ENCODE measurements at regions of chr7 and their contacts with region 1.

Region 1: GRCh38 chr7:4641667-4642467 is 40.2 kb upstream of the FOXK1 start:
- DNase-seq: peak; percentile 95
- H3K4me3 ChIP-seq: peak overlapping the region; percentile 59 to 64 (median 61)
- H3K27ac ChIP-seq: peak overlapping the region; percentile 64
- H3K4me1 ChIP-seq: peaks cover 7% of the 10 kb centered on the region
- H3K27me3 ChIP-seq: no peaks in the 10 kb centered on the region
- CTCF ChIP-seq: peak; percentile 42 to 45
- POLR2A ChIP-seq: peak; percentile 82

Region 2: DNA sequence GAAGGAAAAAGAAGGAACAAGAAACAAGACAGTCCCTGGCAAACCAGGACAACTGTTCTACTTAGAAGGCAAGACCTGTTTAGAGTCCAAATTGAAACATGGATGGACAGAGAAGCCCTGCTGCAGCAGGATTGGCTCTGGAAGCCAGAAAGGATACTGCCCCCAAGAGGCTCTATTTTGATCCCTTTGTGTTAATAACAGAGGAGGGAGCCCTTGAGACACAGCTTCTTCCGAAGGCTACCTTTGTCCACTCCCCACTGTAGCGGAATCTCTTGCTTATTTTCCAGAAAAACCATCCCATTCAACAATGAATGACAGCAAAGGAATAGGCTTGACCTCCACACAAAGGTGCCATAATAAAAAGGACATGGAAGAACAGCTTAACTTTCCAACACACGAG is 80.1 kb before region 1 on chr7:
- CTCF ChIA-PET with region 1: no interaction called
- POLR2A ChIA-PET with region 1: no interaction called
- dilution Hi-C with region 1: no loop called
- intact Hi-C with region 1: no loop called
- DNase-seq: no peak
- H3K4me3 ChIP-seq: no peak overlapping the region
- H3K27ac ChIP-seq: no peak overlapping the region
- H3K4me1 ChIP-seq: no peaks in the 10 kb centered on the region
- H3K27me3 ChIP-seq: no peaks in the 10 kb centered on the region
- CTCF ChIP-seq: no peak
- POLR2A ChIP-seq: no peak

Region 3: DNA sequence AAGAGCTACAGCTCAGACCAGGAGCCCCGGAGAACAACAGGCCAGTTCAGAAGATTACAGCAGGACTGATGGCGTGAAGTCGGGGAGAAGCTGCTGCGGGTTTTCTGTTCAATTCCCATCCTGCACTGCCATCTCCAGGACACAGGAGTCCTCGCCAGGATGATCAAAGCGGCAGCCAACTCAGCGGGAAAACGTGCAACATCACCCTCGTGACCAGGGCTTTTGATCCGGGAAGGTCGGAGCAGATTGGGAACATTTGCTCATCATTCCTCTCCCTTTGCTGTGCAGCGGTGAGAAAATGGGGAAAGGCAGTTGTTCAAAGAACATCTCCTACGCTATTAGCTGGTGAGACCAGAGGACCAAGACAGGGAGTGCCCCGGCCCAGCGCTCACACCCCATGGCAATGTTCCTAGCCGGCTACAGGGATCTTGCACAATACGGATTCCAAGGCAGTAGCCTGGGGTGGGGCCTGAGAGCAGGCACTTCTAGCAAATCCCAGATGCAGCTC is 10.1 kb before region 1 on chr7:
- CTCF ChIA-PET with region 1: interaction called, 14 read pairs
- POLR2A ChIA-PET with region 1: no interaction called
- dilution Hi-C with region 1: no loop called
- intact Hi-C with region 1: no loop called
- DNase-seq: peak; percentile 76
- H3K4me3 ChIP-seq: no peak overlapping the region
- H3K27ac ChIP-seq: no peak overlapping the region
- H3K4me1 ChIP-seq: peaks cover 3% of the 10 kb centered on the region
- H3K27me3 ChIP-seq: no peaks in the 10 kb centered on the region
- CTCF ChIP-seq: peak; percentile 65 to 66
- POLR2A ChIP-seq: no peak

Region 4: GRCh38 chr7:4653793-4654192 is 11.9 kb after region 1 on chr7:
- CTCF ChIA-PET with region 1: no interaction called
- POLR2A ChIA-PET with region 1: no interaction called
- dilution Hi-C with region 1: no loop called
- intact Hi-C with region 1: no loop called
- DNase-seq: no peak
- H3K4me3 ChIP-seq: no peak overlapping the region
- H3K27ac ChIP-seq: no peak overlapping the region
- H3K4me1 ChIP-seq: no peaks in the 10 kb centered on the region
- H3K27me3 ChIP-seq: no peaks in the 10 kb centered on the region
- CTCF ChIP-seq: no peak
- POLR2A ChIP-seq: no peak

Region 5: DNA sequence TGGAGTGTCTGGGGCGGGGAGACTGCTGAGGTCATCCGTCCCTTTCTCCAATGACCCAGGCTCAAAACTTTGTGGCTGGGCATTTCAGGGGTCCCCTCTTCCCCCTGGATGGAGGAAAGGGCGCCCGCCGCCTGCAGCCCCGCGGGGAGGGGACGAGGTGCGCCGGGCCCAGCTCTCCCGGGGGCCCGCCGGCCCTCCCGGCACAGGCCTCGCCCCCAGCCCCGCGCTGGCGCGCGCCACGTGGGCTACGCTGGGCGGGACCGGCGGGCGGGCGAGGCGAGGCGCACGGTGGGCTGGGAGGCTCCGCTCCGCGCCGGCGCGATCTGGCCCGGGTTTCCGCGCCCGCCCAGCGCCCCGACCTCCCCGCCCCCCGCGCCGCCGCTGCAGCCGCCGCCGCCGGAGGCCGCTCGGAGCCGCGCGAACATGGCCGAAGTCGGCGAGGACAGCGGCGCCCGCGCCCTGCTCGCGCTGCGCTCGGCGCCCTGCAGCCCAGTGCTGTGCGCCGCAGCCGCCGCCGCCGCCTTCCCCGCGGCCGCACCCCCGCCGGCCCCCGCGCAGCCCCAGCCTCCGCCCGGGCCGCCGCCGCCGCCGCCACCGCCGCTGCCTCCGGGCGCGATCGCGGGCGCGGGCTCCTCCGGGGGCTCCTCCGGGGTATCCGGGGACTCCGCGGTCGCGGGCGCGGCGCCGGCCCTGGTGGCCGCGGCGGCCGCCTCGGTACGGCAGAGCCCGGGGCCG is 40.2 kb after region 1 on chr7 and contains the start of gene FOXK1:
- CTCF ChIA-PET with region 1: interaction called, 19 read pairs
- POLR2A ChIA-PET with region 1: interaction called, 7 read pairs
- dilution Hi-C with region 1: no loop called
- intact Hi-C with region 1: loop called (anchors 1 kb)
- DNase-seq: peak; percentile 39
- H3K4me3 ChIP-seq: peak within 1 kb of the TSS; percentile 69 to 76 (median 74)
- H3K27ac ChIP-seq: peak within 1 kb of the TSS; percentile 87
- H3K4me1 ChIP-seq: peaks cover 19% of the 10 kb centered on the region
- H3K27me3 ChIP-seq: no peaks in the 10 kb centered on the region
- CTCF ChIP-seq: no peak
- POLR2A ChIP-seq: peak; percentile 65
- total RNA-seq, gene FOXK1: 47.0 and 52.1 TPM in 2 replicates

Region 6: GRCh38 chr7:4706384-4707216 is 64.7 kb after region 1 on chr7:
- CTCF ChIA-PET with region 1: interaction called, 4 read pairs
- POLR2A ChIA-PET with region 1: interaction called, 4 read pairs
- dilution Hi-C with region 1: no loop called
- intact Hi-C with region 1: loop called (anchors 1 kb)
- DNase-seq: peak; percentile 79
- H3K4me3 ChIP-seq: peak overlapping the region in 2 of 3 experiments; percentile 3 to 31
- H3K27ac ChIP-seq: peak overlapping the region; percentile 98
- H3K4me1 ChIP-seq: peaks cover 38% of the 10 kb centered on the region
- H3K27me3 ChIP-seq: no peaks in the 10 kb centered on the region
- CTCF ChIP-seq: no peak
- POLR2A ChIP-seq: no peak

Region 7: DNA sequence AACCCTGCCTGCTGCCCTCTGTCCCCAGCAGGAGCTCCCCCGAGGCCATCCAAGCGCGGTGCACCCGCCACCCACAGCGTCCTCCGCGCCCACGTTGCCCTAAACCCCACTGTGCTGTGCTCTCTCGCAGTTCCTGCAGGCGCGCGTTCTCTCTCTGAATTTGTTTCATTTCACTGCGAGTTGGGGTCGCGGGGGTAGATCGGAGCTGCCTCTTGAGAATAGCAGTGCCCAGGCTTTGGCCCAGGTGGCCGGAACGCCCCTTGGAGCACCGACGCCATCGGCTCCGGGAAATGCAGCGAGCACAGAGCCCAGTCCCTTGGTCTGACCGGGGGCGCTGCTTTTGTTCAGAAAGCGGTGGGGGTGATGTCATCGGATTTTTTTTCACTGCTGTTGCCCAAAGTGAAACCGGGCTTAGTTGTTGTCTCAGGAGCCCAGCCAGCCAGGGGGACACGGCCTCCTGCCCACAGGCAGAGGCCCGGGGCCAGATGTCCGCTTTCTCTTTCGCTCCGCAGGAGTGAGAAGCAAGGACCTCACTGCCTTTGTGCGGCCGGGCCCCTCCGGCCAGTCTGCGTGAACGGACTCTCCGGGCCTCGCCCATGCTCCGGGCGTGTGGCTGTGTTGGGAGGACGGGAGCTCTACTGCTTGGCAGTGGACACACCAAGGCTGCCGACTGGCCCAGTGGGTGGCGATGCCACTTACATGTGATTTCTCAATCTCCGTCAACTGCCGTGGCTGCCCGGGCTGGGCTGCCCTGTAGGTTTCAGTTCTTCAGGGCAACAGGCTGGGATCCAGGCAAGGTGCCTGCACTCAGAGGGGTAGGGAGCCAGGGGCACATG is 83.4 kb after region 1 on chr7:
- CTCF ChIA-PET with region 1: interaction called, 10 read pairs
- POLR2A ChIA-PET with region 1: no interaction called
- dilution Hi-C with region 1: no loop called
- intact Hi-C with region 1: loop called (anchors 1 kb)
- DNase-seq: peak; percentile 95
- H3K4me3 ChIP-seq: peak overlapping the region; percentile 26 to 30 (median 28)
- H3K27ac ChIP-seq: peak overlapping the region; percentile 92
- H3K4me1 ChIP-seq: peaks cover 23% of the 10 kb centered on the region
- H3K27me3 ChIP-seq: no peaks in the 10 kb centered on the region
- CTCF ChIP-seq: no peak
- POLR2A ChIP-seq: peak; percentile 67

Region 8: DNA sequence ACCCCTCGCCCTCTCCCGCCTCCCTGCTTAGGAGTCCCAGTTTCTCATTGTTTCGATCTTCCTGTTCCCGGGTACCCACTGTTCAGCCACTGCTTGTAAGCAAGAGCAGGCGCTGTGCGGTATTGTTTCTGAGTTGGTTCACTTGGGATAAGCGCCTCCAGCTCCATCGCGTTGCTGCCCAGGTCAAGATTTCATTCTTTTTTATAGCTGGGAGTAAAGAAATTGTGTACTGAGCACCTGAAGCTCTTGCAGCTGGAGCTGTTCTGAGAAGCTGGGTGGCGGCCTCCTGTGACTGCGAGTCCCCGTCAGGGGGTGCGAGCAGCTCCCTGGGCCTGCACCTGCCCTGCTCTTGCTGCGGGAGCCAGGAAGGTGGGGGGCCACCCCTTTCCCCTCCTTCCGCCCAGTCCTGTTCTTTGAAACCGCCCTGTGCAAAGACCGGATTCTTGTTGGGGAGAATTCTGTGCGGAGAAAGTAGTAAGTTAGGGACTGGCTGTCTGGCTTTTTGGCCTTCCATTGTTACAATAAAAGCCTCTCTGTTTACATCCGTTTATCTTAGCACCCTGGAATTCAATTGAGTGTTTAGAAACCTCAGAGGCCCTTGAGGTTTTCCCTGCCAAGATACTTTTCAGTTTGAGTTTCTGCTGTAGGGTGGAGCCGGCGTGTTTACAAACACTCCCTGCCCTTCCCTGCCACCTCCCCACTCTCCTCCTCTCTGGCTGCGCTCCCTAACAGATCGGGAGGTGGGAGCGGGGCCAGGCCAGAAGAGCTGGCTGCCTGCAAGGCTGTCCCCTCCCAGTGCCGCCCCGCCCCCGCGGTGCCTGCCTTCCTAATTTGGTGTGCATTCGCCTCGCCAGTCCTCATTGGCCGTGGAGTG is 102.8 kb after region 1 on chr7:
- CTCF ChIA-PET with region 1: interaction called, 7 read pairs
- POLR2A ChIA-PET with region 1: interaction called, 6 read pairs
- dilution Hi-C with region 1: no loop called
- intact Hi-C with region 1: loop called (anchors 2 kb)
- DNase-seq: peak; percentile 96
- H3K4me3 ChIP-seq: no peak overlapping the region
- H3K27ac ChIP-seq: peak overlapping the region; percentile 76
- H3K4me1 ChIP-seq: peaks cover 49% of the 10 kb centered on the region
- H3K27me3 ChIP-seq: no peaks in the 10 kb centered on the region
- CTCF ChIP-seq: no peak
- POLR2A ChIP-seq: no peak

Region 9: DNA sequence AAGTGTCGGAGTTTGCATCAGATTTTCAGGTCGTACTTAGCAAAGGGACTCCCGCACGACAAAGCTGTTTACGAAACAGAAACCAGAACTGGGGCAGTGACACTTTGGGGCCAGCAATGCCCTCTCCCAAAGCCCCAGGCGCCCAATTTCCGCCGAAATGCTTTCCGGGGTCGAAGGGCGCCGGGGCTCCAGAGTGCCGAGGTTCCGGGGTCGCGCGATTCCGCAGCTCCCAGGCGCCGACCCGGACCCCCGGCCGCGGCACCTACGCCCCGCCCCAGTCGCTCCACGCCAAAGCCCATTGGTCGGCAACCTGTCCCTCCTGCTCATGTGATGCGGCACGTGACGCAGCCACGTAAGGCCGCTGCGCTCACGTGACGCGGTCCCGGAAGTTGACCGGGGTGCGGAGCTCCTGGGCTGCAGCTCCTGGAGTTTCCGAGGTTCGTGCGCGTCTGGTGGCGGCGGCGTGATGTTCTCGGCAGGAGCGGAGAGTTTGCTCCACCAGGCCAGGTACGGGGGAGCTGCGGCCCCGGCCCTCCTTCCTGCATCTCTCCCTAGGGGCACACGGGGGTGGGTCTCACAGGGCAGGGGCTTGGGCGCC is 133.5 kb after region 1 on chr7 and contains the start of gene AP5Z1:
- CTCF ChIA-PET with region 1: interaction called, 10 read pairs
- POLR2A ChIA-PET with region 1: interaction called, 3 read pairs
- dilution Hi-C with region 1: no loop called
- intact Hi-C with region 1: loop called (anchors 1 kb)
- DNase-seq: peak; percentile 94
- H3K4me3 ChIP-seq: peak within 1 kb of the TSS; percentile 44 to 71 (median 64)
- H3K27ac ChIP-seq: peak within 1 kb of the TSS; percentile 67
- H3K4me1 ChIP-seq: peaks cover 11% of the 10 kb centered on the region
- H3K27me3 ChIP-seq: no peaks in the 10 kb centered on the region
- CTCF ChIP-seq: no peak
- POLR2A ChIP-seq: peak; percentile 62
- total RNA-seq, gene AP5Z1: 58.9 and 64.3 TPM in 2 replicates